HepG2 (cell line): ENCODE measurements at regions of chr10 and their contacts with region 1.

Region 1: DNA sequence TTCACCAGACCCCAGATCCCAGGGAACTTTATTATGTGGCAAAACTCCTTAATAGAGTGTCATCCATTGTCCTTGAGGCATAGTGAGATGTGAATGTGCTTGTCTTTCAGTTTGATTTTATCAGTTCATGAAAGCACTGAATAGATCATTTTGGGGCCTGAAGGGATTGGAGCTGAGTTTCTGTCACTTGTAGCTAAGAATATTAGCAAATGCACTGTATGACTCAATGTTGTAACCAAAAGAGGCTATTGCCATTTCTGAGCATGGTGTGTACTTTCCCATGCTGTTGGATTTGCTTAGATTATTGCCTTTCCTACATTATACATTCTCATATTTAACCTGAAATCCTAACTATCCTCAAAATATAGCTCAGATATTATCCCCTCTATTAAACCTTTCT is 130.4 kb downstream of the PRKG1 start:
- DNase-seq: no peak
- ATAC-seq: no peak
- H3K4me3 ChIP-seq: no peak overlapping the region
- H3K27ac ChIP-seq: no peak overlapping the region
- H3K4me1 ChIP-seq: no peaks in the 10 kb centered on the region
- H3K27me3 ChIP-seq: no peaks in the 10 kb centered on the region
- CTCF ChIP-seq: no peak
- EP300 ChIP-seq: no peak
- POLR2A ChIP-seq: no peak
- RAD21 ChIP-seq: no peak

Region 2: GRCh38 chr10:50582766-50583762 is 621.6 kb before region 1 on chr10:
- CTCF ChIA-PET with region 1: no interaction called
- POLR2A ChIA-PET with region 1: no interaction called
- in situ Hi-C with region 1: no loop called
- intact Hi-C with region 1: loop called (anchors 5 kb)
- DNase-seq: no peak
- ATAC-seq: no peak
- H3K4me3 ChIP-seq: no peak overlapping the region
- H3K27ac ChIP-seq: no peak overlapping the region
- H3K4me1 ChIP-seq: peaks cover 28% of the 10 kb centered on the region
- H3K27me3 ChIP-seq: no peaks in the 10 kb centered on the region
- CTCF ChIP-seq: no peak
- EP300 ChIP-seq: no peak
- POLR2A ChIP-seq: no peak
- RAD21 ChIP-seq: no peak